Caco-2 (cell line): ENCODE measurements at regions of chr4 and their contacts with region 1.

Region 1: DNA sequence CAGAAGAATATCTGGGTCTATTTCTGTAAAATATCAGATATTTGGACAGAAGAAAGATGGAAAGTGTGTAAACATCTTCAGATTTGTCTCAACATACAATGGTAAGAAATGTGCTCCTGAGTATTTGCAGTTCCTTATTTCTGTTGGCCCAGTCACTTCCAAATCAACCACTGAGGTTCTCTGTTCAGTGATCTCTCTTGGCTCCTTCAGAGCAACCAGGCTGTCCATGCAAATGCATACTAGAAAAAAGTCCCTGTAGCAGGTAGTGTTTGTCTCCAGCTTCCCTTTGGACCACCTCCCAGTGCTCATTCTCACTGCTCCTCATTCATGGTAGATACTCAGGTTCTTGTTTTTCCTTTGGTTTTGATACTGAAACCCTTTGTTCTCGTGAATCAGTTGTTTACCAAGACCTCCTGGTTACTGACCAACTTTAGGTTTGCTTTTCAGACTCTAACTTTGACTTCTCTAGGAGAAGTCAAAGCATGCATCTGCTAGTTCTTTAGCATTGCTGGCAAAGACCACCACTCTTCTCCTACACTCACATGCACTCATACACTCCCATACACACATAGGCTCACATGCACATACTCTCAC is 28.8 kb downstream of the ASIC5 start:
- DNase-seq: no peak
- H3K4me3 ChIP-seq: no peak overlapping the region
- H3K4me3 Mint-ChIP-seq: no peak overlapping the region
- H3K27ac Mint-ChIP-seq: no peak overlapping the region
- H3K4me1 ChIP-seq: peaks cover 5% of the 10 kb centered on the region; the same call in 1 of the 2 replicates
- H3K4me1 Mint-ChIP-seq: peaks cover 15% of the 10 kb centered on the region
- H3K27me3 ChIP-seq: no peaks in the 10 kb centered on the region
- H3K27me3 Mint-ChIP-seq: no peaks in the 10 kb centered on the region
- CTCF ChIP-seq: no peak

Region 2: GRCh38 chr4:155609455-155610059 is 227.7 kb before region 1 on chr4:
- CTCF ChIA-PET with region 1: no interaction called
- POLR2A ChIA-PET with region 1: no interaction called
- intact Hi-C with region 1: no loop called
- DNase-seq: no peak
- H3K4me3 ChIP-seq: no peak overlapping the region
- H3K4me3 Mint-ChIP-seq: no peak overlapping the region
- H3K27ac Mint-ChIP-seq: no peak overlapping the region
- H3K4me1 ChIP-seq: no peaks in the 10 kb centered on the region
- H3K4me1 Mint-ChIP-seq: no peaks in the 10 kb centered on the region
- H3K27me3 ChIP-seq: no peaks in the 10 kb centered on the region
- H3K27me3 Mint-ChIP-seq: no peaks in the 10 kb centered on the region
- CTCF ChIP-seq: no peak

Region 3: GRCh38 chr4:155759405-155760252 is 77.7 kb before region 1 on chr4:
- CTCF ChIA-PET with region 1: no interaction called
- POLR2A ChIA-PET with region 1: no interaction called
- intact Hi-C with region 1: no loop called
- DNase-seq: no peak
- H3K4me3 ChIP-seq: no peak overlapping the region
- H3K4me3 Mint-ChIP-seq: no peak overlapping the region
- H3K27ac Mint-ChIP-seq: no peak overlapping the region
- H3K4me1 ChIP-seq: no peaks in the 10 kb centered on the region
- H3K4me1 Mint-ChIP-seq: no peaks in the 10 kb centered on the region
- H3K27me3 ChIP-seq: no peaks in the 10 kb centered on the region
- H3K27me3 Mint-ChIP-seq: no peaks in the 10 kb centered on the region
- CTCF ChIP-seq: no peak

Region 4: DNA sequence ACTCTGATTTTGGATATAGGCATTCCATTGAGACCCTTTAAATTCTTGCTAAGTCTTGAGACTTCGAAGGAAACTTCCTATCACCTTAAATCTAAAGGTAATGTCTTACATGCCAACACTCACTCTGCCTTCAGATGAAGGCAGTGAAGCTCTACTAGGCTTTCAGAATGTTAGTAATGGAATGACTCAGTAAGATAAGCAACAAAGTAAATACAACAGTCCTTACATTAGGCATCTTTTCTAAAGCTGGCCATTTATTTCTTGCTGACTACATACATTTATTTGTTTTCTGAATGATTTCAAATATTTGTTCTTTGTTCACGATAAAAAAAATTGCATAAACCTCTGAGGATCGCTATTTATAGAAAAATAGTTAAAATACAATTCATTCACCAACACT is 14.7 kb before region 1 on chr4:
- CTCF ChIA-PET with region 1: interaction called, 3 read pairs
- POLR2A ChIA-PET with region 1: no interaction called
- intact Hi-C with region 1: loop called (anchors 1 kb)
- DNase-seq: no peak
- H3K4me3 ChIP-seq: no peak overlapping the region
- H3K4me3 Mint-ChIP-seq: peak overlapping the region; percentile 23
- H3K27ac Mint-ChIP-seq: peak overlapping the region; percentile 64
- H3K4me1 ChIP-seq: peaks cover 40% of the 10 kb centered on the region
- H3K4me1 Mint-ChIP-seq: peaks cover 49% of the 10 kb centered on the region
- H3K27me3 ChIP-seq: no peaks in the 10 kb centered on the region
- H3K27me3 Mint-ChIP-seq: no peaks in the 10 kb centered on the region
- CTCF ChIP-seq: no peak

Region 5: DNA sequence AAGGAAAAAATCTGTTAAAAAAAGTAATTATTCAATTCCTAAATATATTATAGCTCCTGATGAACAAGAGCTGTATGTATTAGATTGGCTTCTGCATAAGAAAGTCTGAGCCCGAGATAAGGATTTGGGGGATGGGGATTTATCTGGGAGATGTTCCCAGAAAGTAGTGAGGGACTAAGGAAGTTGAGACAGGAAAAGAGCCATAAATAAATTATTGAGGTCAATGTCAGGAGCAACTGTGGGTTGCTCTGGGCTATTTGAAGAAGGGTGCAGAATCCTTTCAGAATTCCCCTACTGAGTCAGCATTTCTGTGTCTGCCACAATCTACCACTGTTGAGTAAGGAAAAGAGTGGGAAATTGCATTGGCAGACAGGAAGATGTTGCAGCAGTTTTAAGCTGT is 63.1 kb after region 1 on chr4:
- CTCF ChIA-PET with region 1: no interaction called
- POLR2A ChIA-PET with region 1: no interaction called
- intact Hi-C with region 1: loop called (anchors 5 kb)
- DNase-seq: no peak
- H3K4me3 ChIP-seq: no peak overlapping the region
- H3K4me3 Mint-ChIP-seq: no peak overlapping the region
- H3K27ac Mint-ChIP-seq: no peak overlapping the region
- H3K4me1 ChIP-seq: peaks cover 34% of the 10 kb centered on the region
- H3K4me1 Mint-ChIP-seq: peaks cover 14% of the 10 kb centered on the region
- H3K27me3 ChIP-seq: no peaks in the 10 kb centered on the region
- H3K27me3 Mint-ChIP-seq: no peaks in the 10 kb centered on the region
- CTCF ChIP-seq: no peak

Region 6: DNA sequence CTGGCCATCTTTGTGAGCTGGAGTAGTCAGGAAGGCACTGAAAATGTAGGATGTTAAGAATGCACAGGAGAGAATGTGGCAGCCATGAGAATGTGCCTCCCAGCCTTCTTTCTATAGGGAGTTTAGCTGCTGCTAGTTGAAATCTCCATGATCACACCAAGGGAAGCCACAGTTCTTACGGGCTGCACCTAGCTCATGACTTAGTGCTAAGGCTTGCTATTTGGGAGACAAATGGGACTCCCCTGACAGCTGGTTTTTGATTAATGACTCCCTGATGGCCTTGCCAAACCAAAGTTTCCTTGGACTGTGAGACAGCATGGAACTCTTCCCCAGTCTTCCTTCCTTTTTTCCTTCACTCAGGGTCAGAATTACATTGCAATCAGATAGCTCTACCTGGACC is 107.2 kb after region 1 on chr4:
- CTCF ChIA-PET with region 1: no interaction called
- POLR2A ChIA-PET with region 1: no interaction called
- intact Hi-C with region 1: loop called (anchors 1 kb)
- DNase-seq: no peak
- H3K4me3 ChIP-seq: no peak overlapping the region
- H3K4me3 Mint-ChIP-seq: no peak overlapping the region
- H3K27ac Mint-ChIP-seq: no peak overlapping the region
- H3K4me1 ChIP-seq: peaks cover 31% of the 10 kb centered on the region
- H3K4me1 Mint-ChIP-seq: peaks cover 13% of the 10 kb centered on the region
- H3K27me3 ChIP-seq: no peaks in the 10 kb centered on the region
- H3K27me3 Mint-ChIP-seq: no peaks in the 10 kb centered on the region
- CTCF ChIP-seq: no peak